Lower leg skin (tissue), 4 donors: ENCODE measurements at regions of chr5 and their contacts with region 1.

Region 1: GRCh38 chr5:54007827-54008777 is 302.3 kb downstream of the ARL15 start:
- DNase-seq: peak in 1 of 2 donors; percentile 18
- H3K4me3 ChIP-seq: no peak overlapping the region
- CTCF ChIP-seq: no peak
- POLR2A ChIP-seq: no peak

Region 2: DNA sequence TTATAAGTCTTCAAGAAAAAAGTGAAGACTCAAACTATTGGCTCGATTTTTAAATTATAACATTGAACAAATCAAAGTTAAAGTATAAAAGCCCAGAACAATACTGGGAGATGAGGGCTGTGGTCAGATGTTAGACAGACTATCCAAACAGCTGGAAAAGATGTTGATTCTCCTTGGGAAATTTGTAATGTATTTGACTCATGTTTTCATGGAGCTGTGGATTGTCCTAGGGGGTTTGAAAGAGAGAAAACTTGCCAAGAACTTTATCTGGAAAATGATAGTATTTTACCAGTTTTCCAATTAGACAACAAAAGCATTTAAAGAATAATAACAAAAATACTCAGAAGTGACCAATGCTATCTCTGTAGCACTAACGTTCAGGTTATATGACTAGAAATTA is 37.0 kb before region 1 on chr5:
- intact Hi-C with region 1: no loop called
- DNase-seq: no peak
- H3K4me3 ChIP-seq: no peak overlapping the region
- CTCF ChIP-seq: no peak
- POLR2A ChIP-seq: no peak

Region 3: GRCh38 chr5:53997736-53998627 is 10.1 kb before region 1 on chr5:
- intact Hi-C with region 1: loop called (anchors 1 kb)
- DNase-seq: no peak
- H3K4me3 ChIP-seq: no peak overlapping the region
- CTCF ChIP-seq: no peak
- POLR2A ChIP-seq: no peak